ENCODE measurements at regions of chr16 and their contacts with region 1.

Region 1: GRCh38 chr16:18801197-18801972 is at the start of gene ARL6IP1:
- DNase-seq: peak; percentile 98 to 99
- H3K4me3 ChIP-seq: peak within 1 kb of the TSS; percentile 94
- H3K4me1 ChIP-seq: peaks cover 35% of the 10 kb centered on the region
- H3K27me3 ChIP-seq: no peaks in the 10 kb centered on the region

Region 2: GRCh38 chr16:18853694-18854093 is 52.3 kb after region 1 on chr16:
- in situ Hi-C with region 1: no loop called
- DNase-seq: no peak
- H3K4me3 ChIP-seq: no peak overlapping the region
- H3K4me1 ChIP-seq: no peaks in the 10 kb centered on the region
- H3K27me3 ChIP-seq: no peaks in the 10 kb centered on the region

Region 3: DNA sequence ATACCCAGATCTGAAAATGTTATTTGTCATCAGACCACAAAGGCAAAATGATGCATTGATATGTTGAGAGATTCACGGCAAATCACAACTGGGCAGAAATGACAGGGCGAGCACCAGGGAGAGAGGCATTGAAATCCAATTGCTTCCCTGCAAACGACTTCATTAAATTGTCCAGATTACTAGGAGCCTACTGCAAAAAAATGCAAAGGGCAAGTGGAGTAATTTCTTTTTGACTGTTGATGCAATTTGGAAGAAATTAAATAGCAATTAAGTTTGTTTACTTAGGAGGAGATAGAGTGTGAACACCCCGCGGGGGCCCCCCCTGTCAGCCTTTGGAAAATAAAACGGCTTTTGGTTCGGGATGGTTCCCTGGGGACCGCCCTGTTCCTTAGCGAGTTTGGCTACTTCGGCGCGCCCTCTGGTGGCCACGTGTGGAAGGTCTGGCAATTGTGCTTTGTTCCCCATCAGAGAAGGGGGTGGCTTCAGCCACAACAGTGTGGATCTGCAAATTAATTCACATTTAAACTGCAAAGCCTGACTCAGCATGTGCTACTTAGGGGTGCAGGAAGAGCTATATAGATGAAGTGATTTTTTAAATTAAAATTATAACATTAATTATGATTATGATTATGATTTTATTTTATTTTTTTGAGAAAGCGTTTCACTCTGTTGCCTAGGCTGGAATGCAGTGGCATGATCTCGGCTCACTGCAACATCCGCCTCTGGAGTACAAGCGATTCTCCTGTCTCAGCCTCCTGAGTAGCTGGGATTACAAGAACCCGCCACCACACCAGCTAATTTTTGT is 167.9 kb after region 1 on chr16:
- in situ Hi-C with region 1: loop called (anchors 5 kb)
- DNase-seq: peak; percentile 80 to 95
- H3K4me3 ChIP-seq: peak overlapping the region; percentile 6; the same call in 1 of the 2 replicates
- H3K4me1 ChIP-seq: peaks cover 9% of the 10 kb centered on the region
- H3K27me3 ChIP-seq: no peaks in the 10 kb centered on the region

Region 4: GRCh38 chr16:18983565-18984424 is 182.4 kb after region 1 on chr16 and contains the start of gene TMC7:
- in situ Hi-C with region 1: no loop called
- DNase-seq: peak; percentile 88 to 95
- H3K4me3 ChIP-seq: peak within 1 kb of the TSS; percentile 48
- H3K4me1 ChIP-seq: peaks cover 3% of the 10 kb centered on the region; the same call in 1 of the 2 replicates
- H3K27me3 ChIP-seq: peaks cover 5% of the 10 kb centered on the region; the same call in 1 of the 2 replicates

Region 5: DNA sequence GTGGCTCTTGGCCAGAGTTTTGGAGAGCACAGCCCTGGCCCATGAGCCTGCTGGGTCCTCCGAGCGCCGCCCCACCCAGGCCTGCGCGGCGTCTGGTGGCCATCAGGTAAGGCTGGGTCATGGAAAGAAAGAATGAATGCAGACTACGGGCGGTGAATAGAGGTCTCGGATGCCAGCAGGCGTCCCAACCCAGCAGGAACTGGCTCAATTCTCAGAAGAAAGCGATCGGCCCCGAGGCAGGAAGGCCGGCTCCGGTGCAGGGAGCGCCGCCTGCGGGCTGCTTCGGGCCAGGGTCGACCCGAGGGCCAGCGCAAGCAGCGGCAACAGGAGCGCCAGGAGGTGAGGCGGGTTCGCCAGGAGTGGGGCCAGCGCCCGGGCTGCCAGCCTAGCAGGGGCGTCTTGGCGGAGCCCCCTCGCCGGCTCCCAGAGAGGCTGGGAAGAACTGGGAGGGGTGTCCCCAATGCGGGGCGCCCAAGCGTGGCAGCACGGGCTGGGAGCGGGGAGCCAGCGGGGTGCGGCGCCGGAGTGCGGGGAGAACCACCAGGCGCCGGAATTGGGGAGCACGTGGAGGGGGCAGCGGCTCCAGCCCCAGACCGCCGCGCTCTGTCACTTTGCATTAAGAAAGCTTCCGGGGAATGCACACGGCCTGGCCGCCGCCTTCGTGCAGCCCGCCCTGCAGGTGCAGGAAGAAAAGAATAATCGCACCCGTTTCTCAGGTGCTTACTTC is 609.2 kb after region 1 on chr16:
- in situ Hi-C with region 1: no loop called
- DNase-seq: peak; percentile 40 to 82
- H3K4me3 ChIP-seq: peak overlapping the region; percentile 37
- H3K4me1 ChIP-seq: peaks cover 15% of the 10 kb centered on the region
- H3K27me3 ChIP-seq: no peaks in the 10 kb centered on the region; the same call in 1 of the 2 replicates

Region 6: GRCh38 chr16:19474617-19475016 is 673.2 kb after region 1 on chr16:
- in situ Hi-C with region 1: no loop called
- DNase-seq: no peak
- H3K4me3 ChIP-seq: no peak overlapping the region
- H3K4me1 ChIP-seq: no peaks in the 10 kb centered on the region
- H3K27me3 ChIP-seq: no peaks in the 10 kb centered on the region

Region 7: DNA sequence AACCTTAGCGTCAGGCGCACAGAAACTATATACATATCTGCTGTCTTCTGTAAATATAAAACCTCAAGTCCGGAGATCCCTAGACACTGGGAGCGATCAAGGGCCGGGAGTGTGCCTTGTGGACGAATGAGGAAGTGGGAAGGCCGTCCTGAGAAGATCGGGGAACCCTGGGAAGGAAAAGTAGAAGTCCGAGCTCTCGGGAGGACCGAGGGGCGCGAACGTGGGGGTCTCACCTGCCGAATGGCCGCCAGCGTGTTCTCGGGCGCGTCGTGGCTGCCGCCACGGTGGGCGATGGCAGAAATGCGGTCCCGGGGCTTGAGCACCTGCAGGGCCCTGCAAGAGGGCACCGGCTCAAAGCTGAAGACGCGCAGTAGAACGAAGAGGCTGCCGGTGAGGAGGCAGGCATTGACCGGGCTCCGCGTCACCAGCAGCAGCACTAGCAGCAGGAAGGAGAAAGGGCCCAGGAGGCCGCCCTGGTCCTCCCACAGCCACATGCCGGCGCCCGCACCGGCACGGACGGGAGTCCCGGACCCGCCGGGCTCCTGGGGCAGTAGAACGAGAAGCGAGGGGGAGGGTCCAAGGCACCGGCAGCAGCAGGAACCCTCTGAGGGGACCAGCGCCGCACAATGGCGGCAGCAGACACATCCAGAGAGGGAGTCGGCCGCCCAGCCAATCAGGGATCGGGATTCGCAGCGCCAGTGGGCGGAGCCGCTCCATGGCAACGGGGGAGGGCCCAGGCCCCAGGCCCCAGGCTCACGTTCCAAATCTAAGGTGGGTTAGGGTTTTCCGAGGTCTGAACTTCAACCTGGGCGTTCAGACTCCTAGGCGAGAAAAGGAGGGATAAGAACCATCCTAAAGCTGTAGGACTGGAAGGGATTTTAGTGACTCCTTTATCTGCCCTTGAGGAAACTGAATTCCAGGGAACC is 720.3 kb after region 1 on chr16 and contains the start of gene GDE1:
- in situ Hi-C with region 1: loop called (anchors 25 kb)
- DNase-seq: peak; percentile 92 to 97
- H3K4me3 ChIP-seq: peak within 1 kb of the TSS; percentile 84
- H3K4me1 ChIP-seq: peaks cover 48% of the 10 kb centered on the region
- H3K27me3 ChIP-seq: no peaks in the 10 kb centered on the region